ENCODE measurements at regions of chr9 and their contacts with region 1.

Region 1: GRCh38 chr9:69667306-69667705 is 4.9 kb downstream of the APBA1 start:
- DNase-seq: no peak
- H3K4me3 ChIP-seq: no peak overlapping the region
- CTCF ChIP-seq: no peak
- POLR2A ChIP-seq: no peak

Region 2: GRCh38 chr9:70043689-70044489 is 376.6 kb after region 1 on chr9 and contains the start of gene MAMDC2:
- intact Hi-C with region 1: loop called (anchors 10 kb)
- DNase-seq: peak; percentile 56 to 93
- H3K4me3 ChIP-seq: peak within 1 kb of the TSS; percentile 47
- CTCF ChIP-seq: no peak
- POLR2A ChIP-seq: peak in 1 of 2 donors; percentile 27
- total RNA-seq, gene MAMDC2: 5.7 to 14.1 (median 9.9) TPM